ENCODE measurements at regions of chr5 and their contacts with region 1.

Region 1: GRCh38 chr5:137891849-137892248 is 2.6 kb downstream of the PKD2L2 start:
- DNase-seq: peak; percentile 7
- ATAC-seq: peak; percentile 64; the same call in 2 of the 3 replicates
- H3K4me3 ChIP-seq: no peak overlapping the region
- H3K27ac ChIP-seq: no peak overlapping the region
- H3K4me1 ChIP-seq: peaks cover 34% of the 10 kb centered on the region
- H3K27me3 ChIP-seq: 0 out of 5 replicates have a peak, but pooled peaks cover 0 to 3% of the 10 kb centered on the region in 2 experiments
- CTCF ChIP-seq: no peak
- EP300 ChIP-seq: no peak
- POLR2A ChIP-seq: no peak
- RAD21 ChIP-seq: no peak

Region 2: GRCh38 chr5:137699336-137700281 is 192.2 kb before region 1 on chr5:
- CTCF ChIA-PET with region 1: no interaction called
- POLR2A ChIA-PET with region 1: no interaction called
- in situ Hi-C with region 1: no loop called
- intact Hi-C with region 1: no loop called
- DNase-seq: no peak
- ATAC-seq: no peak
- H3K4me3 ChIP-seq: no peak overlapping the region
- H3K27ac ChIP-seq: no peak overlapping the region
- H3K4me1 ChIP-seq: no peaks in the 10 kb centered on the region
- H3K27me3 ChIP-seq: peaks cover 1 to 8% of the 10 kb centered on the region in 2 experiments; a peak in 2 of 5 replicates
- CTCF ChIP-seq: no peak
- EP300 ChIP-seq: no peak
- POLR2A ChIP-seq: no peak
- RAD21 ChIP-seq: no peak

Region 3: DNA sequence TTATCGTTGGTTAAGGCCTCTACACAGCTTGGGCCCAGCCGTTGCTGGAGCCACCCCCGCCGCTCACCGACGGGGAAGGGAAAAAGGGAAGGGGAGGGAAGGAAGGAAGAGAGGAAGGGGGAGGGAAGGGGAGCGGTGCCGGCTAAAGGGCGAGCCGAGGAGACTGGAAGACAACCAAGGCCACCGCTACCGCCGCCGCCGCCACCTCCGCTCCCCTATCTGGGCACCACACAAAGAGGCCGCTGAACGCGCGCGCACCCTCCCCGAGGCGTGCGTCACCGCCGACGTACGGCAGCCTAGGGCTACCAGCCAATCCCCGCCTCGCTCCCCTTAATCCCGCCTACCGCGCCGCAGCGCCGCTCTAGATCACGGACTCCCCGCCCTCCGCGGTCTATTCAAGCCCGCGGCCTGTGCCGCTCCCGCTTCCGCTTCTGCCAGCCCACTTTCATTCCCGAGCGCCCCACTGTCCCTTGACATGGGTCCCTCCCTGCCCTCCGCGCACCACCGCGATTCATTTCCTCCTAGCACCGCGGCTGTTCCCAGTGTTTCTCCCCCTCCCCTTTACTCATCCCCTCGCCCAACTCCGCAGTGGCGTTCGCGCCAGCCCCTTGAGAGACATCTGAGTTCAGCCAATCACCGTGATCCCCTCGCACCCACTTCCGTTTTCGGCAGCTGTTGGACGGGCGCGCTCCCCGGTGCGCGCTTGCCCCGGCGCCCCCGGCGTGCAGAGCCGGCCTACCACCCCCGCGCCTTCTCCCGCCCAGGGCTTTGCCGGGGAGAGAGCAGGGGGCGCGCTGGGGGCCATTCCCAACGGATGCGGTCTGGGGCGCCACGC is 137.5 kb before region 1 on chr5 and contains the start of gene HNRNPA0:
- CTCF ChIA-PET with region 1: no interaction called
- POLR2A ChIA-PET with region 1: no interaction called
- in situ Hi-C with region 1: no loop called
- intact Hi-C with region 1: loop called (anchors 10 kb)
- DNase-seq: peak; percentile 92
- ATAC-seq: peak; percentile 94
- H3K4me3 ChIP-seq: peak within 1 kb of the TSS; percentile 89 to 100 (median 98)
- H3K27ac ChIP-seq: peak within 1 kb of the TSS; percentile 99
- H3K4me1 ChIP-seq: peaks cover 40% of the 10 kb centered on the region
- H3K27me3 ChIP-seq: peaks cover 1 to 8% of the 10 kb centered on the region in 2 experiments; a peak in 2 of 5 replicates
- CTCF ChIP-seq: no peak; the same call in 1 of the 2 replicates
- EP300 ChIP-seq: peak in 1 of 2 experiments; percentile 98; a peak in 3 of 4 replicates
- POLR2A ChIP-seq: peak; percentile 96
- RAD21 ChIP-seq: 0 out of 2 replicates have a peak, but pooled peaks have one; percentile 24
- total RNA-seq, gene HNRNPA0: 12.9 and 16.9 TPM in 2 replicates